ENCODE measurements at regions of chr2 and their contacts with region 1.

Region 1: GRCh38 chr2:63614983-63615945 is 26.5 kb downstream of the MDH1 start:
- DNase-seq: peak; percentile 63
- H3K4me3 ChIP-seq: no peak overlapping the region
- H3K27ac ChIP-seq: peak overlapping the region; percentile 79
- H3K4me1 ChIP-seq: peaks cover 26% of the 10 kb centered on the region
- H3K27me3 ChIP-seq: no peaks in the 10 kb centered on the region
- CTCF ChIP-seq: no peak

Region 2: DNA sequence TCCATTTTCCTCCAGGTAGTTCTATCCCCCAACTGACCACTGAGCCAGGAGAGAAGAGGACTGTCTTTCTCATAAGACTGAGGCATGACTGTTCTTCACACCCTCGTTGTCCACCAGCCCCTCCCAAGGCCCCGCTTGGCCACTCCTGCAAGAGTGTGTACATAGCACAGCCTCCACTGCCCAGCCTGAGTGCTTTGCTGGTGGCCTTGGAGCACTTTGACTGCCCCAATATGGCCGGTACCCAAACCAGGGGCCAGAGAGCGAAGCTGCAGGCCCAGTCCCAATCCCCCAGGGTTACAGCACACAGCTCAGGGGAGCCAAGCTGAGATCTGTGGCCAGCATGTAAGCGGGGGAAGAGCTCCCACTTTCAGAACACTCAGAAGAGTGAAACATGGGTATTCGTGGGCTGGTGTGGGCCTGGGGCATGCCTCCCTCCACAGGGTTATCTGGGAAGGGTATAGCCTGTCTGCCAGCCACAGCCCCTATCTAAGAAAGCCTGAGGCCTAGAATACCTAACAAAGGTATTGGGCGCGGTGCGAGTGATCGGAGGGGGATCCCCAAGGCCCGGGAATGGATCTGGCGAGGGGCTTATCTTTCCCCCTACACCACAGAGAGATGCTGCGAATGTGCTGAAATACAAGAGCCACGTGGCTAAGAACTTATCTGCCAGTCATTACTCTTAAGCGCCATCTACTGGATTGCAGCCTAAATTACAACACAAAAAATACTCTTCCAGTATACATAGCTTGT is 190.8 kb before region 1 on chr2:
- CTCF ChIA-PET with region 1: interaction called, 12 read pairs
- dilution Hi-C with region 1: no loop called
- in situ Hi-C with region 1: no loop called
- intact Hi-C with region 1: no loop called
- DNase-seq: peak; percentile 38
- H3K4me3 ChIP-seq: no peak overlapping the region
- H3K27ac ChIP-seq: no peak overlapping the region
- H3K4me1 ChIP-seq: no peaks in the 10 kb centered on the region
- H3K27me3 ChIP-seq: no peaks in the 10 kb centered on the region
- CTCF ChIP-seq: peak; percentile 67 to 73

Region 3: GRCh38 chr2:63588385-63589147 is 26.7 kb before region 1 on chr2 and contains the starts of genes MDH1 and WDPCP:
- CTCF ChIA-PET with region 1: no interaction called
- dilution Hi-C with region 1: no loop called
- in situ Hi-C with region 1: no loop called
- intact Hi-C with region 1: loop called (anchors 2 kb)
- DNase-seq: peak; percentile 100
- H3K4me3 ChIP-seq: peak within 1 kb of the TSS; percentile 77 to 91 (median 88)
- H3K27ac ChIP-seq: peak within 1 kb of the TSS; percentile 50
- H3K4me1 ChIP-seq: peaks cover 16% of the 10 kb centered on the region
- H3K27me3 ChIP-seq: no peaks in the 10 kb centered on the region
- CTCF ChIP-seq: no peak
- total RNA-seq, gene MDH1: 112 to 133 TPM
- total RNA-seq, gene WDPCP: 5.4 to 11.0 TPM

Region 4: GRCh38 chr2:63700271-63700670 is 85.0 kb after region 1 on chr2:
- CTCF ChIA-PET with region 1: no interaction called
- dilution Hi-C with region 1: no loop called
- in situ Hi-C with region 1: no loop called
- intact Hi-C with region 1: no loop called
- DNase-seq: no peak
- H3K4me3 ChIP-seq: no peak overlapping the region
- H3K27ac ChIP-seq: no peak overlapping the region
- H3K4me1 ChIP-seq: peaks cover 25% of the 10 kb centered on the region
- H3K27me3 ChIP-seq: no peaks in the 10 kb centered on the region
- CTCF ChIP-seq: no peak